ENCODE measurements at regions of chr7 and their contacts with region 1.

Region 1: GRCh38 chr7:80392229-80393169 is 119.4 kb downstream of the GNAT3 start:
- DNase-seq: no peak
- H3K4me3 ChIP-seq: no peak overlapping the region
- H3K27ac ChIP-seq: no peak overlapping the region
- H3K4me1 ChIP-seq: peaks cover 0 to 4% (median 0%) of the 10 kb centered on the region in 4 donors
- H3K27me3 ChIP-seq: no peaks in the 10 kb centered on the region
- CTCF ChIP-seq: peak; percentile 17 to 57 (median 44)
- EP300 ChIP-seq: no peak
- POLR2A ChIP-seq: no peak

Region 2: DNA sequence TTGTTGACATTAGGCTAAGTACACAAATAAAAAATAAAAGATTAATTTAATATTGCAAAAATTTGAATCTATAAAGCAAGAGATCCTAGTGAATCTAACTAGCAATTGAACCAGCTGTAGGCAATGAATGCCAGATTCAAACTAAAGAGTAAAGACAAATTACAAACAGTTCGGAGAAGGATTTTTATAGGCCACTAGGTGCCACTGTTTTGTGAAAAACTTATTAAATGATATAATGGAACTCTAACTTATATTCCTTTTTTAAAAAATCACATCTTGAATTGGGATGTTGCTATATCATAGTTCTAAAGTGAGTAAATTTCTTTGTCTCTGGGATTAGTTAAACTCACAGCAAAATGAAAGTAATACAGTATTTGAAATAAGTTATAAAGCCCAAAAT is 297.0 kb before region 1 on chr7:
- intact Hi-C with region 1: loop called (anchors 5 kb)
- DNase-seq: no peak
- H3K4me3 ChIP-seq: no peak overlapping the region
- H3K27ac ChIP-seq: no peak overlapping the region
- H3K4me1 ChIP-seq: no peaks in the 10 kb centered on the region
- H3K27me3 ChIP-seq: no peaks in the 10 kb centered on the region
- CTCF ChIP-seq: peak in 3 of 4 experiments; percentile 33 to 42 (median 34)
- EP300 ChIP-seq: no peak
- POLR2A ChIP-seq: no peak

Region 3: DNA sequence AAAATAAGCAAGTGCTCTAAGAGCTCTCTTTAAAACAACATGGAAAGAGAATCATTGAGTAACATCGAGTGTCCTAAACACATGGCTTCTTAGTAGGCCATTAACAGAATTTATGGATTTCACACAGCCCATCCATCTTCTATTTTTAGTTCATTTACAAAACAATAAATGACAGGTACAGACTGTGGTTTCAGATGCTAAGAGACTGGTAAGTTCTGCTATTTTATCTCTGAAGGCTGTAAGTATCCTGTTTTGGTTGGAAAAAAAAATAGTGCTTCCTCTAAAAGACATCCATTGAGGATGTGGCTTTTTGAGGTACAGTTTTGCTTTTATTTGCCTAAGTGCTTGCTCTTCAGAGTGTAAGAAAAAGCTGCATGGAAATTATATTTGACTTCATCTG is 285.2 kb before region 1 on chr7:
- intact Hi-C with region 1: no loop called
- DNase-seq: no peak
- H3K4me3 ChIP-seq: no peak overlapping the region
- H3K27ac ChIP-seq: no peak overlapping the region
- H3K4me1 ChIP-seq: peaks cover 0 to 11% (median 4%) of the 10 kb centered on the region in 4 donors
- H3K27me3 ChIP-seq: no peaks in the 10 kb centered on the region
- CTCF ChIP-seq: no peak
- EP300 ChIP-seq: no peak
- POLR2A ChIP-seq: no peak

Region 4: GRCh38 chr7:80478683-80479082 is 86.2 kb after region 1 on chr7:
- intact Hi-C with region 1: no loop called
- DNase-seq: no peak
- H3K4me3 ChIP-seq: no peak overlapping the region
- H3K27ac ChIP-seq: no peak overlapping the region
- H3K4me1 ChIP-seq: no peaks in the 10 kb centered on the region
- H3K27me3 ChIP-seq: no peaks in the 10 kb centered on the region
- CTCF ChIP-seq: no peak
- EP300 ChIP-seq: no peak
- POLR2A ChIP-seq: no peak